Caco-2 (cell line): ENCODE measurements at regions of chr12 and their contacts with region 1.

Region 1: DNA sequence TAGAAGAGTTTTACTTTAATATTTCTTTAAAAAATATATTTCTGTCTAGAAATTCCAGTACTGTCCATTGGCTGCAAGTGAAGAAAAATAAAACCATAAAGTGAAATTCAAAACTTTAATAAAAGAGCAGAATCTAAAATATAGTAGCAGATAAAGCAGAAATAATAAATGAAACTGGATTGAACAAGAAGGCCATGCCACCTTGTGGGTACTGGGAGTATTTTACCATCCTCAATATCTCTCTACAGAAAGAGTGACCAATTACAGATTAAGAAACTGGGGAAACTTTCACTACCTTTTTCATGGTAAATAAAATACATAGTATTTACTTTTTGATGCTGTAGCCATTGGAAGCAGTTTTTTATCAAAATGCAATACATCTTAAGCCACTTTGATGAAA is 220.5 kb downstream of the BCAT1 start:
- DNase-seq: peak in 1 of 2 experiments; percentile 42
- H3K4me3 ChIP-seq: no peak overlapping the region
- H3K4me3 Mint-ChIP-seq: no peak overlapping the region
- H3K27ac Mint-ChIP-seq: no peak overlapping the region
- H3K4me1 ChIP-seq: peaks cover 6% of the 10 kb centered on the region; the same call in 1 of the 2 replicates
- H3K4me1 Mint-ChIP-seq: peaks cover 8% of the 10 kb centered on the region
- H3K27me3 ChIP-seq: no peaks in the 10 kb centered on the region
- H3K27me3 Mint-ChIP-seq: no peaks in the 10 kb centered on the region
- CTCF ChIP-seq: peak; percentile 63 to 84

Region 2: GRCh38 chr12:24630446-24630845 is 97.9 kb before region 1 on chr12:
- CTCF ChIA-PET with region 1: no interaction called
- POLR2A ChIA-PET with region 1: no interaction called
- intact Hi-C with region 1: loop called (anchors 1 kb)
- DNase-seq: peak in 1 of 2 experiments; percentile 49
- H3K4me3 ChIP-seq: no peak overlapping the region
- H3K4me3 Mint-ChIP-seq: no peak overlapping the region
- H3K27ac Mint-ChIP-seq: no peak overlapping the region
- H3K4me1 ChIP-seq: peaks cover 4% of the 10 kb centered on the region
- H3K4me1 Mint-ChIP-seq: peaks cover 26% of the 10 kb centered on the region
- H3K27me3 ChIP-seq: no peaks in the 10 kb centered on the region
- H3K27me3 Mint-ChIP-seq: no peaks in the 10 kb centered on the region
- CTCF ChIP-seq: peak; percentile 56

Region 3: DNA sequence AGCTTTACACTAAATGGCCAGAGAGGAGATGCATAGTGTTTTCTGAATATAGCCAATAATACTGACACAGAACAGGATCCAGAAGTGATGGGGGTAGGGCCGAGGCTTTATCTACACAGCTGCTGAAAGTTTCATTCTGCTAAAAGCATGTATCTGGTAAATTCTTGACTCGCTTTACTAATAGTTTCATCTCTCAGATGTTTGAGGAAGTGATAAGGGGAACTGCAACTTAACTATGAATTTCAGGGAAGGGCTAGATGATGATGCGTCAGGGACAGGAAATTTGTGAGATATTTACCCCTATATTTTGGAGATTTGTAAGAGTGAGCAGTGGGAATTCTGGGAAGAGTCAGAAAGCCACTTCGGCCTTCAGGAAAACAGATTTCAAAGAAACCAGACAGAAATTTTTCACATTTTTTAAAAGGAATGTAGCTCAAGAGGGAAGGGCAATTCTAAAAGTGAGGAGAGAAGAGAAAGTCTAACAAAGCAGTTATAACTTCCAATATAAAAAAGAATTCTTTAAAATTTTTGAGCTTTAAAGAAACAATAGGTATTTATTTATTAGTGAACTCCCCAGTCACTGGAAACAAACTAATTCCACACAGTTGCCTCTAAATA is 22.5 kb before region 1 on chr12:
- CTCF ChIA-PET with region 1: no interaction called
- POLR2A ChIA-PET with region 1: no interaction called
- intact Hi-C with region 1: no loop called
- DNase-seq: no peak
- H3K4me3 ChIP-seq: no peak overlapping the region
- H3K4me3 Mint-ChIP-seq: peak overlapping the region; percentile 58
- H3K27ac Mint-ChIP-seq: peak overlapping the region; percentile 81
- H3K4me1 ChIP-seq: peaks cover 34% of the 10 kb centered on the region
- H3K4me1 Mint-ChIP-seq: peaks cover 11% of the 10 kb centered on the region
- H3K27me3 ChIP-seq: no peaks in the 10 kb centered on the region
- H3K27me3 Mint-ChIP-seq: no peaks in the 10 kb centered on the region
- CTCF ChIP-seq: no peak

Region 4: DNA sequence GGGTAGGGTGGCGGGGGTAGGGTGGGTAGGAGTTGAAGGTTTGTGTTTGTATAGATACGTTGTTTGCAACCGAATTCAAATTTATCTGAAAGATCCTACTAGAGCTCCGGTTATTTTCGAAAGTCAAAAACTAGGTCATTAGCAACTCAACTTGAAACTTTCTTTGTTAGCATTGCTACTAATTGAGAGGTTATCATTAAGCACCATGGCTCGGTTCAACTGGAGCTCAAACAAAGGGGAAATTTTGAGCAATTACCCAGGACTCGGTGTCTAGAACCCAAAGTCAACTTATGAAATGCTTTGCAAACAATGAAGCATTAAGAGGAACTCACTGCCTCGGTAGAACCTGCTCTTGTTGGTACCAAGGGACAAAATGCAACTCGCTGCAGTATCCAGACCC is 12.8 kb after region 1 on chr12:
- CTCF ChIA-PET with region 1: no interaction called
- POLR2A ChIA-PET with region 1: no interaction called
- intact Hi-C with region 1: loop called (anchors 1 kb)
- DNase-seq: no peak
- H3K4me3 ChIP-seq: no peak overlapping the region
- H3K4me3 Mint-ChIP-seq: no peak overlapping the region
- H3K27ac Mint-ChIP-seq: no peak overlapping the region
- H3K4me1 ChIP-seq: peaks cover 33% of the 10 kb centered on the region
- H3K4me1 Mint-ChIP-seq: peaks cover 29% of the 10 kb centered on the region
- H3K27me3 ChIP-seq: no peaks in the 10 kb centered on the region
- H3K27me3 Mint-ChIP-seq: no peaks in the 10 kb centered on the region
- CTCF ChIP-seq: no peak